ENCODE measurements at regions of chr17 and their contacts with region 1.

Region 1: DNA sequence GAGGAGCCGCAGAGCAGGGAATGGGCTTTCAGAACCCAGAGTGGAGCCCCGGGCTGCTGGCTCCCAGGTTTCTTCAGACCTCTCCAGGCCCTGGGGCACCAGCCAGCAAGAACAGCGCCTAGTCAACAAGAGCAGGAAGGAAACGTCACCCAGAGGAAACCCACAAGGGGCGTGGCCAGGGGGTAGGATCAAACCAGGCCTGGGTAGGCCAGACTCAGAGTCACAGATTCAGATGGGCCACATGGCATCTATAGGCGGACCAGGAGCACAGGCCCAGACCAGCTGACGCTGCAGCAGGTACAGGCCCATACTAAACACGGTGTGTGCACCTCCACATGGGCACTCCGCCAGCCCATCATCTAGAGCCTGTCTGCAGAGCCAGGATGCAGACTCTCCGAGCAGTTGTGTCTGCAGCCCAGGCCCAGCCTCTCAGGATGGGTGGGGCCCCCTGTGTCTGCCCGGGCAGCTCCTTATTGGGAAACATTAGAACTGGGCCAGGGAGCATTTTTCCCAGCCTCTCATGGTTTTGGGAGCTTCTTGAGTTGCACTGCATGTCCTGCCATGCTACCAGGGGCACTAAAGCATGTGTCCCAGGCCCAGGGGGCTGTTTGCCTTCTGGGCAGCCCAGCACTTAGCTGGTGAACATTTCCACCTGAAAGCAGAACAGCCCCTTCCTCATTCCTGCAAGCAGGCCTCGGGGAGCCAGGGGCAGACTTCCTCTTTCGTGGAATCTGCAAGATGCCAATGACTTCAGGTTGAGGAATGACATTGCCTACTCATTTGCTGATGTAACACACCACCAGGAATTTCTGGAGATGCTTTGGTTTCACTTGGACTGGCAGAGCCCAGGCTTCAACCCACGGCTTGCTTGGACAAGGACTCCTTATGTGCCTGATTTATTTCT is at the start of gene NLRP1:
- DNase-seq: peak; percentile 86
- ATAC-seq: peak; percentile 81
- H3K4me3 ChIP-seq: no peak within 1 kb of the TSS
- H3K27ac ChIP-seq: peak within 1 kb of the TSS; percentile 83
- H3K4me1 ChIP-seq: peaks cover 44% of the 10 kb centered on the region
- H3K27me3 ChIP-seq: no peaks in the 10 kb centered on the region
- CTCF ChIP-seq: no peak
- total RNA-seq, gene NLRP1: 1.8 and 2.2 TPM in 2 replicates

Region 2: DNA sequence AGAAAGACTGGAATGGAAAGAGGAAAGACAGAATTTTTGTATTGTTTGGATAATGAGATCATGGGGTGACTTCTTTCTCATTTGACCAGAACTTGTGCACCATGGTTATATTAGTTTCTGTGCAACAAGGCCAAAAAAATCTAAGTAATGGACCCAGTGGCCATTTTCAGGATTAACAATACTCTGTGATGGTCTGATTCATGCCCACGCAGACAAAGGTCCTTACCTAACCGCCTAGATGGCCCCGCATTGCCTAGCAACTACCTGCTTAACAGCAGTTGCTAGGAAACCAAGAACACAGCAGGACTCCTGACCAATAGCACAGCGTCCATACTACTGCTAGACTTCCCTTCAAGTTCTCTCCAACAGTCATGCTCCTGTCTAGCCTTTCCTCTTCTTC is 75.8 kb before region 1 on chr17:
- CTCF ChIA-PET with region 1: no interaction called
- POLR2A ChIA-PET with region 1: no interaction called
- intact Hi-C with region 1: loop called (anchors 5 kb)
- DNase-seq: no peak
- ATAC-seq: no peak
- H3K4me3 ChIP-seq: no peak overlapping the region
- H3K27ac ChIP-seq: no peak overlapping the region
- H3K4me1 ChIP-seq: no peaks in the 10 kb centered on the region
- H3K27me3 ChIP-seq: no peaks in the 10 kb centered on the region
- CTCF ChIP-seq: no peak

Region 3: DNA sequence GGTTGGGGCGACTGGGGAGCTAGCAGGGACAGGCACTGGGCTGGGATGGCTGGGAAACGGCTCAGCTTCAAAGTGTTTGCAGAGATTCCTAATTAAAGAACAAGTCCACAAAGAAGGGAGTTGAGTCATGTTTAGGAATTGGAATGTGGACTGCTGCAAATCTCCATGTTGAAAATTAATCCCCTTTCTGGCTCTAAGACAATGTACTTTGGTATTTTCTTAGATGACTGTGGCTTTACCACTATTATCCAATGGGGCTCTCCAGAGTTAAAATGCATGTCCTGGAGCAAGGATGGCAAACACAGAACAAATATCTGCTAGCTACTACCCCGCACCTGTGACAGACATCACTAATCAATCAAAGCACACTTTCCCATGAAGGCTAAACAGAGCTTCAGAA is 463.3 kb after region 1 on chr17:
- CTCF ChIA-PET with region 1: no interaction called
- POLR2A ChIA-PET with region 1: no interaction called
- intact Hi-C with region 1: no loop called
- DNase-seq: no peak
- ATAC-seq: no peak
- H3K4me3 ChIP-seq: no peak overlapping the region
- H3K27ac ChIP-seq: no peak overlapping the region
- H3K4me1 ChIP-seq: peaks cover under 1% of the 10 kb centered on the region; the same call in 1 of the 2 replicates
- H3K27me3 ChIP-seq: no peaks in the 10 kb centered on the region
- CTCF ChIP-seq: no peak

Region 4: GRCh38 chr17:6279659-6280058 is 695.0 kb after region 1 on chr17:
- CTCF ChIA-PET with region 1: no interaction called
- POLR2A ChIA-PET with region 1: no interaction called
- intact Hi-C with region 1: loop called (anchors 2 kb)
- DNase-seq: peak; percentile 87
- ATAC-seq: peak; percentile 79
- H3K4me3 ChIP-seq: no peak overlapping the region
- H3K27ac ChIP-seq: no peak overlapping the region
- H3K4me1 ChIP-seq: peaks cover 4% of the 10 kb centered on the region; the same call in 1 of the 2 replicates
- H3K27me3 ChIP-seq: no peaks in the 10 kb centered on the region
- CTCF ChIP-seq: peak; percentile 80

Region 5: DNA sequence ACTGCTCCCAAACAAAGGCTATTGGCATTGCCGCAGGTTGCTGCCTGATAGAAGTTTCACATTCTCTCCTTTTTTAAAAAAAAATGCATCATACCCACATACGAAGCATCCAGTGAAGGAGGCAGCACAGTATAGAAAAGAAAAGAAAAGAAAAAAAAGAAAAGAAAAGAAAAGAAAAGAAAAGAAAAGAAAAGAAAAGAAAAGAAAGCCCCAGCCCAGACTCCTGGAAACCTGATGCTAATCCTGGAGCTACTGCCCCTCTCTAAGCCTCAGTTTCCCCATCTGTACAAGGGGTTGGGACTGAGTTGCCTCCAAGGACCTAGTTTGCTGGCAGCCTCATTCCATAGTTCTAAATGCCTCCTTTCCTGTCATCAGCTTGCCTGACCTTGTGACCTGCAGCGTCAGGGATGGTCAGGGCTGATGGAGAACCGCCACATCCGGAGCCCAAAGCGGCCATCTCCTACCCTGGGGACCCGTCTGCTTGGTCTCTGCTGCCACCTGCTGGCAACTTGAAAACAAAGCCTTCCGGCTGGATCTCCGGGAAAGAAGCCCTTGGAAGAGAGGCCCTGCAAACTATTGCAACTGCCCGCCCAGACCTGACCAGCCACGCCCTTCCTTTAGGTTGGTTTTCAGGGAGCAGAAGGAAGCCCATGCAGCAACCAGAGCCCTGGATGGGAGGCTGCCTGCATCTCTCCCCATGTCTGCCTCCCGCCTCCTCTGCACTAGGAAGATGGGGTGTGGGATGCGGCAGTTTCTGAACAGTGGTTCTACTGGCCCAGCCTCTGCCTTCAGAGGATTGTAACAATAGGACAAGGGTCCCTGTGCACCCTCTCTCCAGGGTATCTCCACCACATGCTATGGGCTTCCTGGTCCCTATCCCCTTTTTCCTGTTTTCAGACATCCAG is 837.3 kb after region 1 on chr17:
- CTCF ChIA-PET with region 1: no interaction called
- POLR2A ChIA-PET with region 1: no interaction called
- intact Hi-C with region 1: loop called (anchors 1 kb)
- DNase-seq: peak; percentile 82
- ATAC-seq: peak; percentile 88
- H3K4me3 ChIP-seq: no peak overlapping the region
- H3K27ac ChIP-seq: no peak overlapping the region
- H3K4me1 ChIP-seq: no peaks in the 10 kb centered on the region
- H3K27me3 ChIP-seq: no peaks in the 10 kb centered on the region
- CTCF ChIP-seq: peak; percentile 86